Activated CD8-positive, alpha-beta T cell treated with anti-CD3 and anti-CD28 coated beads for 36 hours (primary cell): ENCODE measurements at regions of chr4 and their contacts with region 1.

Region 1: GRCh38 chr4:38663801-38664705 is at the start of gene KLF3:
- DNase-seq: peak; percentile 68
- ATAC-seq: peak; percentile 64
- H3K4me3 Mint-ChIP-seq: peak within 1 kb of the TSS; percentile 79
- H3K27ac Mint-ChIP-seq: peak within 1 kb of the TSS; percentile 89
- H3K4me1 Mint-ChIP-seq: peaks cover 63% of the 10 kb centered on the region
- H3K27me3 Mint-ChIP-seq: no peaks in the 10 kb centered on the region
- CTCF ChIP-seq: no peak
- total RNA-seq, gene KLF3: 5.5 to 6.0 TPM

Region 2: DNA sequence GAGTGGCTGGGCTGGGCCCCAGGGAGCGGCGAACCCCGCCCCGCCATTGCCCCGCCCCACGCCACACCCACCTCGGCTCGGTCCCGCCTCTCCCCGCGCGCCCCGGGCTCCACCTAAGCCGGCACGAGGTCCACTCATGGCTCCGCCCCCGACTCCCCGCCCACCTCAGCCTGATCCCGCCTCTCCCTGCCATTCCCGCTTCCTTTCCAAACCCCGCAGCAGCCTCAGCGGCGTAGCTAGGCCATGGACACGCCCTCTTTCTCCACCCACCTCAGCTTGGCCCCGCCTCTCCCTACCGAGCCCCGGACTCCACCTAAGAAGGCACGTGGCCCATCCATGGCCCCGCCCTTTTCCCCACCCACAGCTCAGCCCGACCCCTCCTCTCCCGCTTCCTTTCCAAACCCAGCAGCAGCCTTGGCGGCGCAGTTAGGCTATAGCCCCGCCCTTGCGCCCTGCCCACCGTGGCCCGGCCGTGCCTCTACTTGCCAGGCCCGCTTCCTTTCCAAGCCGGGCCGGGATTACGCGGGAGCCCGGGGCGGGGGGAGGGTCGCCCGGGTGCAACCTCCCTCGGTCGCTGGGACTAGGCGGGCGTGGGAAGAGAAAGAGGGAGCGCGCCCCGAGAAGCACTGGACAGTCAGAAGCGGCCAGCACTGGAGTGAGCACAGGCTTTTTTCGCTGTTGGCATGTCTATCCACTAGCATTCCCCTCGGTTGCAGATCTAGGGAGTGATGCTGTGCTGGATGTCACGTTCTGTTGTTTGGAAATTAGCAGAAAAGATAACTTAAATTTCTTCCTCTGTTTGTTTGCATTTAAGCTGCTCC is 977.5 kb before region 1 on chr4 and contains the start of gene RELL1:
- CTCF ChIA-PET with region 1: no interaction called
- POLR2A ChIA-PET with region 1: no interaction called
- intact Hi-C with region 1: loop called (anchors 10 kb)
- DNase-seq: peak; percentile 99
- ATAC-seq: peak; percentile 92
- H3K4me3 Mint-ChIP-seq: peak within 1 kb of the TSS; percentile 80
- H3K27ac Mint-ChIP-seq: peak within 1 kb of the TSS; percentile 90
- H3K4me1 Mint-ChIP-seq: peaks cover 34% of the 10 kb centered on the region
- H3K27me3 Mint-ChIP-seq: no peaks in the 10 kb centered on the region
- CTCF ChIP-seq: no peak
- total RNA-seq, gene RELL1: 13.8 to 15.3 TPM